ENCODE measurements at regions of chr12 and their contacts with region 1.

Region 1: GRCh38 chr12:121128970-121129810 is 3.5 kb upstream of the P2RX7 start:
- DNase-seq: peak; percentile 94
- H3K4me3 Mint-ChIP-seq: peak overlapping the region; percentile 79
- H3K27ac Mint-ChIP-seq: peak overlapping the region; percentile 96
- H3K4me1 Mint-ChIP-seq: peaks cover 70% of the 10 kb centered on the region
- H3K27me3 Mint-ChIP-seq: no peaks in the 10 kb centered on the region

Region 2: GRCh38 chr12:121015825-121016766 is 113.1 kb before region 1 on chr12 and contains the start of gene C12orf43:
- intact Hi-C with region 1: loop called (anchors 1 kb)
- DNase-seq: peak; percentile 98
- H3K4me3 Mint-ChIP-seq: peak within 1 kb of the TSS; percentile 98
- H3K27ac Mint-ChIP-seq: peak within 1 kb of the TSS; percentile 99
- H3K4me1 Mint-ChIP-seq: peaks cover 20% of the 10 kb centered on the region
- H3K27me3 Mint-ChIP-seq: no peaks in the 10 kb centered on the region
- total RNA-seq, gene C12orf43: 32.5 and 35.3 TPM in 2 replicates

Region 3: DNA sequence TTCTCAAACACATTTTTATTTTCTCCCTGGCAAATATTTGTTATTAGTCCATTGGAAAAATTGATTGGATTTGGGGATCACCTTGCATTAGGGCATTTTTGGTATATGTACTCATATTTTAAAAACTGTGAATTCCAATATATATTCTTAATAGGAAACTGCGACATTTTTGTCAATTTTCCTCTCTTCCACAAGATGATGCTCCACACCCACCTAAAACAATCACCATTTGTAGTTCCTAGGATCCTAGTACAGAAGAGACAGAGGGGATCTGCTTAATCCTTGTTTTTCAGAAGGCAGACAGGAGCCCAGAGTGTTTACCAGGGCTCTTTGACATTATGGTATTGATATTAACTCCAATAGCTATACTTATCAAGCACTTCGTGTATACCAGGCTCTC is 67.4 kb before region 1 on chr12:
- intact Hi-C with region 1: no loop called
- DNase-seq: peak; percentile 44
- H3K4me3 Mint-ChIP-seq: no peak overlapping the region
- H3K27ac Mint-ChIP-seq: no peak overlapping the region
- H3K4me1 Mint-ChIP-seq: peaks cover 22% of the 10 kb centered on the region
- H3K27me3 Mint-ChIP-seq: peaks cover 3% of the 10 kb centered on the region

Region 4: GRCh38 chr12:121144416-121144914 is 15.3 kb after region 1 on chr12:
- intact Hi-C with region 1: loop called (anchors 1 kb)
- DNase-seq: no peak
- H3K4me3 Mint-ChIP-seq: peak overlapping the region; percentile 52
- H3K27ac Mint-ChIP-seq: peak overlapping the region; percentile 86
- H3K4me1 Mint-ChIP-seq: peaks cover 28% of the 10 kb centered on the region
- H3K27me3 Mint-ChIP-seq: no peaks in the 10 kb centered on the region

Region 5: DNA sequence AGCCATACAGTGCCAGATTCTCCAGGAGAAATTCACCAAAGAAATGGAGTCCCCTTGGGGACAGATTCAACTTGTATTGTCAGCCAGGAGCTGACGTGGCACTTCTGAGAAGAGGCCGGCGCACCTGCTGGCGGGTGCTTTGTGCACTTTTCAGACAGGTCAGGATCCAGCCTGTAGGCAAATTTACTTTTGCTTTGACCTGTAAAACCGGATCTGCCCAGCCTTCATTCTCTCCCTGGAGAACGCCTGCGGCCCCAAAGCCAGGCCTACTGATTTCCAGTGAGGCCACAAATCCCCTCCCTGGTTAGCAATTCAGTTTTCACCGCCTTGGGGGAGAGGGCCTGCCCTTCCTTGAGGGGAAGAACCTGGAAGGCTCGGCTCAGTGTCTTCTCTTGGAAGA is 98.1 kb after region 1 on chr12:
- intact Hi-C with region 1: no loop called
- DNase-seq: no peak
- H3K4me3 Mint-ChIP-seq: no peak overlapping the region
- H3K27ac Mint-ChIP-seq: peak overlapping the region; percentile 29
- H3K4me1 Mint-ChIP-seq: peaks cover 48% of the 10 kb centered on the region
- H3K27me3 Mint-ChIP-seq: no peaks in the 10 kb centered on the region

Region 6: DNA sequence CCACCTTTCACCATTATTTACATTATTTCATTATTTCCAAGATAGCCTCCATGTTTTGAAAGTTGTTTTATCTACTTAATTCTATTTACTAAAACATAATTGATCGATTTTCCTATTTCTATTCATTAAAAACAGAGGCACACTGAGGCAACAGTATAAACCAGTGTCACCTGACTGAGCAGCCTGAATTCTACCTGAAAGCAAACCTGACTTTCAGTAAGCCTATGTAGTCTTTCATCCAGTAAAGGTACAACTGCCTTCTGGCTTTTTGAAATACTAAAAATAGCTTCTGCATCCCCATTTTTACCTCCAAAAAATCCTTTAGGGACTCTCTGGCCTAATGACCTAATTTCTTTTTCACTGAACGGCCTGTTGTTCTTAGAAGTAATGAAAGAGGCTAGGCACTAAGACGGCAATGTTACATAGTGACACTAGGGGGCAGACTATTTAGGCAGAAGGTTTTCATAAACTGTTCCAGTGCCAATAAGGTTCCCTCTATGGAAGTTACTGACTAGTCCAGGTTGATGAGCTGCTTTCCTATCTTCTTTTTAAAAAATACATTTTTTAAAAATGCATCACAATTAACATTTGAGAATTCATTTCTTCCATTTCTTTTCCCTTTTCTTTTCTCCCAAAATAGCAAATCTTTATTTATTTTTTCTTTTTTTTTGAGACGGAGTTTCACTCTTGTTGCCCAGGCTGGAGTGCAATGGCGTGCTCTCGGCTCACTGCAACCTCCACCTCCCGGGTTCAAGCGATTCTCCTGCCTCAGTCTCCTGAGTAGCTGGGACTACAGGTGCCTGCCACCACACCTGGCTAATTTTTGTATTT is 205.5 kb after region 1 on chr12:
- intact Hi-C with region 1: no loop called
- DNase-seq: peak; percentile 80
- H3K4me3 Mint-ChIP-seq: no peak overlapping the region
- H3K27ac Mint-ChIP-seq: peak overlapping the region; percentile 51
- H3K4me1 Mint-ChIP-seq: peaks cover 3% of the 10 kb centered on the region
- H3K27me3 Mint-ChIP-seq: no peaks in the 10 kb centered on the region

Region 7: GRCh38 chr12:121637231-121637914 is 508.2 kb after region 1 on chr12:
- intact Hi-C with region 1: no loop called
- DNase-seq: peak; percentile 84
- H3K4me3 Mint-ChIP-seq: peak overlapping the region; percentile 74
- H3K27ac Mint-ChIP-seq: peak overlapping the region; percentile 90
- H3K4me1 Mint-ChIP-seq: peaks cover 40% of the 10 kb centered on the region
- H3K27me3 Mint-ChIP-seq: no peaks in the 10 kb centered on the region